ENCODE measurements at regions of chr6 and their contacts with region 1.

Region 1: GRCh38 chr6:84220809-84221409 is 6.5 kb downstream of the CEP162 start:
- DNase-seq: peak; percentile 11
- H3K4me3 ChIP-seq: no peak overlapping the region
- H3K27ac ChIP-seq: no peak overlapping the region
- H3K4me1 ChIP-seq: no peaks in the 10 kb centered on the region
- H3K27me3 ChIP-seq: no peaks in the 10 kb centered on the region
- CTCF ChIP-seq: peak; percentile 43 to 52

Region 2: DNA sequence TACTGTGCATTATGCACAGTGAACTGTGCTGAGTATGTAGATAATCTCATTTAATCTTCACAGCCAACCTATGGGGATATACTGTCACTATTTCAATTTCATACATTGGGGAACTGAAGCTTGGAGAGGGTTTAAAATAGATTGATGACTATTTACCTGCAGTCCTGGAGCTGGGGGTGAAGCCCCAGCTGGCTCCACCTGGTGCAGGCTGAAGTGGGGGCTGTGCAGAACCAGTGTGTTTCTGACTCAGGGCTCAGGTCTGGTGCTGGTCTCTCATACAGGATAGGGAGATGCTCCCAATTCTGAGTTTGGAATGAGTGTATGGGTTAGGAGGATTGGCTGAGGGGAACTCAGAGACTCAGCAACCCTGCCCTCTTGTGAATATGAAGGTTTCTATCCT is 182.6 kb after region 1 on chr6:
- CTCF ChIA-PET with region 1: no interaction called
- dilution Hi-C with region 1: no loop called
- in situ Hi-C with region 1: no loop called
- intact Hi-C with region 1: no loop called
- DNase-seq: no peak
- H3K4me3 ChIP-seq: no peak overlapping the region
- H3K27ac ChIP-seq: no peak overlapping the region
- H3K4me1 ChIP-seq: no peaks in the 10 kb centered on the region
- H3K27me3 ChIP-seq: peaks cover 2% of the 10 kb centered on the region
- CTCF ChIP-seq: no peak

Region 3: DNA sequence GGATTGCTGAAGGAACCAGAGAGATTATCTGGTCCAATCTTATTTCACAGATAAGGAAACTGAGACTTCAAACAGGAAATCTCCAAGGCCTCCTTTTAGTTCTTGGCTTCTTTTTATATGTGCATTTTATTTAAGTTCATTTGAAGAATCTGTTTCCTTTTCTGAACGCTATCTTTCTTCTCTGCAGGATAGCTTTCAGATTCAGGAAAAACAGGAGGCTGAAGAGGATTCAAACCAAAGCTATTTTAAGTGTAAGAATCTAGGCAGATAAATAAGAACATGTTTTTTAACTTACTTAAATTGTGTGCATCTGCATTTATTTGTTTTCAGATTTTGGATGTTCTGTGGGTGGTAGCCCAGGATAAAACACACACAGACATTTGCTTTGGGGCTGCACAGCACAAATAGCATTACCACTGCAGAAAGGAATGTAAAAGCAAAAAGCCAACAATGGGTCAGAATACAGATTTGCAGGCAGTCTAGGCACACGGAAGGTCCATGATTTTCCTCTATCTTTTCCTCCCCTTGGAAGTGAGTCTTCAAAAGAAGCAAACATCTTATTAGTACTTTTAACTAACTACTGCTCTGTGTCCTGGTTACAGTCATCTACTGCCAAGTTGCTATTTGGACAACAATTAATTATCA is 732.3 kb after region 1 on chr6:
- CTCF ChIA-PET with region 1: interaction called, 18 read pairs
- dilution Hi-C with region 1: no loop called
- in situ Hi-C with region 1: no loop called
- intact Hi-C with region 1: no loop called
- DNase-seq: no peak
- H3K4me3 ChIP-seq: no peak overlapping the region
- H3K27ac ChIP-seq: no peak overlapping the region
- H3K4me1 ChIP-seq: no peaks in the 10 kb centered on the region
- H3K27me3 ChIP-seq: no peaks in the 10 kb centered on the region
- CTCF ChIP-seq: no peak